ENCODE measurements at regions of chr18 and their contacts with region 1.

Region 1: GRCh38 chr18:77164026-77164425 is 31.4 kb upstream of the MBP start:
- DNase-seq: no peak
- H3K4me3 ChIP-seq: no peak overlapping the region
- H3K27me3 ChIP-seq: no peaks in the 10 kb centered on the region; the same call in 1 of the 2 replicates
- CTCF ChIP-seq: no peak

Region 2: GRCh38 chr18:77054606-77055428 is 109.2 kb before region 1 on chr18:
- CTCF ChIA-PET with region 1: no interaction called
- POLR2A ChIA-PET with region 1: interaction called, 16 read pairs
- DNase-seq: peak; percentile 31
- H3K4me3 ChIP-seq: no peak overlapping the region
- H3K27me3 ChIP-seq: no peaks in the 10 kb centered on the region; the same call in 1 of the 2 replicates
- CTCF ChIP-seq: peak; percentile 90